ENCODE measurements at regions of chr1 and their contacts with region 1.

Region 1: DNA sequence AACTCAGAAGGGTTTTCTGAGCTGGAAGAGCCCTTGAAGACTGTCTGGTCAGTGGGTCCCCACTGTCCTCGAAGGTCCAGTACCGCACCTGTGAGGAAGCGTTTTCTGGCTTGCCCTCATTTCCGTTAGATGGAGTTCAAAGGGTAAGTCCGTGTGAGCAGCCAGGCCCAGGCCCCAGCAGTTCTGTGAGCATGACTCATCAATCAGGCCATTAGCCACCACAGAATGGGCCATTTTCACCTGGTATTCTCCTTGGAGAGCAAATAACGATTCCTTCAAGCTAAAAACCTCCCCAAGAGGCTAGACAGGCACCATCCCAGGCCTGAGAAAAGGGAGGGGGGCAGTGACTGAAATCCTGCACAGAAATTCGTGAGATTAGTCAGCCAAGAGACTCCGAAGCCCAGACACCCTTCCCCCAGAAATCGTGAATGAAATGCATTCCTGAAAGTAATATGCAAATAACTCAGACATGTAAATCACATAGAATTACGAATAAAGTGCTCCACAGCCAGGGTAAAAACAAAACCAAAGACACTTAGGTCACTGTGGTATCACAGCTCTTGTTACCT is 66.0 kb downstream of the BCAR3 start:
- ATAC-seq: peak; percentile 7 to 69 (median 52)
- H3K4me3 ChIP-seq: no peak overlapping the region
- H3K27ac ChIP-seq: peak overlapping the region; percentile 12 to 21
- H3K4me1 ChIP-seq: peaks cover 57 to 64% of the 10 kb centered on the region in 2 donors

Region 2: GRCh38 chr1:93471911-93472310 is 143.8 kb before region 1 on chr1:
- in situ Hi-C with region 1: loop called in 1 of 9 experiments (anchors 25 kb)
- ATAC-seq: no peak
- H3K4me3 ChIP-seq: no peak overlapping the region
- H3K27ac ChIP-seq: no peak overlapping the region
- H3K4me1 ChIP-seq: no peaks in the 10 kb centered on the region

Measured in motor neuron (in vitro differentiated cells).